Activated CD4-positive, alpha-beta T cell treated with anti-CD3 and anti-CD28 coated beads, Interleukin-2, amount 10 ng/mL, durations not matched to agents 24 days and 14 days (primary cell): ENCODE measurements at regions of chr12 and their contacts with region 1.

Region 1: DNA sequence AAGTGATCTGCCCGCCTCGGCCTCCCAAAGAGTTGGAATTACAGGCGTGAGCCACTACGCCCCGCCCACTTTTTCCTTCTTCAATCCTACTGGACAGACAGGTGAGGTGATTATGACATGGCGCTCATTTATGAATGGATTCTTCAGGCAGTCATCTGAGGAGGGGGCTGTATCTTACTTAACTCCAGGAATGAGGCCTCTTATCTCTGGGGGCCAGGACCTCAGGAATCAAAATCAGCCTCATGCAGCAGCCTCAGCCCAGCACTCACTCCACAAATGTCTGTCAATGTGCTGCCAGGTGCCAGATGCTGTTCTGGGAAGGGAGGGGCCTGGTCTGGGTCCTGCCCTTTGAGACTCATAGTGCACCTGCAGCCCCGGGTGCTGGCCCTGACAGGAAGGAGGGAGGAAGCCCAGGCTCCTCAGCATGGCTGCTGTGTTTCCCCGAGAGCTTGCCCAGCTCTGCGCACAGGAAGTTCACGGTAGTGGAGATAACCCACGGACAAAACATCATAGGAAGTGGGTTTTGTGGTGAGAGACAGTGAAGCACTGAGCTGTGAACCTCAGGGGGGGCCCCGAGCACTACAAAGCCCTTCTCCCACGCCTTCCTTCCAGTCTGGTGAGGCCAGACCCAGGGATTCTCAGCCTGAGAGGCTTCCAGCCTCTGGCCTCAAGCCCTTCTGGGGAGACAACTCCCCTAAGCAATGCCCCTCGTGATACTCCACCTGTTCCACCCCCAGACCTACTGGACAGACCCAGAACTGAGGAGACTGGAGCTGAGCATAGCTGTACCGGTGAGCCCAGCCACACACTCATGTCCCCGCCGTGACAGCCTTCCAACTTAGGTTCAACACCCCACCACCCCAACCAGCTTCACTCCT is 22.3 kb downstream of the GALNT6 start:
- DNase-seq: peak; percentile 96
- H3K4me3 Mint-ChIP-seq: peak overlapping the region; percentile 66
- H3K27ac Mint-ChIP-seq: peak overlapping the region; percentile 82
- H3K4me1 Mint-ChIP-seq: peaks cover 48% of the 10 kb centered on the region
- H3K27me3 Mint-ChIP-seq: no peaks in the 10 kb centered on the region

Region 2: GRCh38 chr12:51383281-51383905 is 14.5 kb after region 1 on chr12:
- intact Hi-C with region 1: loop called (anchors 1 kb)
- DNase-seq: peak; percentile 66
- H3K4me3 Mint-ChIP-seq: no peak overlapping the region
- H3K27ac Mint-ChIP-seq: no peak overlapping the region
- H3K4me1 Mint-ChIP-seq: peaks cover 37% of the 10 kb centered on the region
- H3K27me3 Mint-ChIP-seq: no peaks in the 10 kb centered on the region

Region 3: GRCh38 chr12:51391283-51392162 is 22.6 kb after region 1 on chr12 and contains the start of gene GALNT6:
- intact Hi-C with region 1: loop called (anchors 1 kb)
- DNase-seq: peak; percentile 91
- H3K4me3 Mint-ChIP-seq: peak within 1 kb of the TSS; percentile 92
- H3K27ac Mint-ChIP-seq: peak within 1 kb of the TSS; percentile 87
- H3K4me1 Mint-ChIP-seq: peaks cover 66% of the 10 kb centered on the region
- H3K27me3 Mint-ChIP-seq: no peaks in the 10 kb centered on the region
- total RNA-seq, gene GALNT6: 10.7 and 12.8 TPM in 2 replicates